Dendritic cell treated with granulocyte-macrophage colony-stimulating factor and Interleukin-4, amounts not matched to agents 40 ng/mL and 50 ng/mL, for 4 days (primary cell): ENCODE measurements at regions of chr5 and their contacts with region 1.

Region 1: DNA sequence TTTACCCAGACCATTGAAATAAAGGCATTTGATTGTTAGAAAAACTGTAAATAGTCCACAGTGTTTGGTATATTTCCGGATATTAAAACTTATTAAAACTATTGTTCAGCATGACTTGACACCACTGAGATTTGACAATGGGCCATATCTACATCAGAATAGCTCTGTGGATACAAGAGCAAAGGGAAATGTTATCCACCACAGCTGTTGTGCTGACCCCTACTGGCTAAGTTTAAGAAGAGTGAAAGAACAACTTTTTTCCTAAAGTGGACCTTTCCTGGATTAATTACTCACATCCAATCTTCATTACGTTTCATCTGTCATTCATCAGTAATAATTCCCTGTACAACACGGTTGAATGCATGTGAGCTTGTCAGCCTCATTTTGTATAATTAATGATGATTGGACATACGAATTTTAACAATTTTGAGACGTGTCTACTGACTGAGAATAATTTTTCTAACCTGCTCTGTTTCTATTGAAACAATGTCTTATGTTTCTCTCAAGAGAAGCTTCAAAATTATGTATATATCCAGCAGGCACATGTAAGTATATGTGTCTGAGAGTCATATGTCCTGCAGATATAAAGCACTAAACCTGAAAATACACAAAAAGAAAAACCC is 1952.6 kb downstream of the MAT2B start:
- H3K4me3 Mint-ChIP-seq: no peak overlapping the region
- H3K27ac Mint-ChIP-seq: no peak overlapping the region
- H3K4me1 Mint-ChIP-seq: no peaks in the 10 kb centered on the region
- H3K27me3 Mint-ChIP-seq: no peaks in the 10 kb centered on the region

Region 2: GRCh38 chr5:164832516-164832915 is 625.5 kb before region 1 on chr5:
- intact Hi-C with region 1: no loop called
- H3K4me3 Mint-ChIP-seq: no peak overlapping the region
- H3K27ac Mint-ChIP-seq: no peak overlapping the region
- H3K4me1 Mint-ChIP-seq: no peaks in the 10 kb centered on the region
- H3K27me3 Mint-ChIP-seq: no peaks in the 10 kb centered on the region

Region 3: GRCh38 chr5:165029099-165029870 is 428.7 kb before region 1 on chr5:
- intact Hi-C with region 1: loop called (anchors 5 kb)
- H3K4me3 Mint-ChIP-seq: no peak overlapping the region
- H3K27ac Mint-ChIP-seq: no peak overlapping the region
- H3K4me1 Mint-ChIP-seq: no peaks in the 10 kb centered on the region
- H3K27me3 Mint-ChIP-seq: no peaks in the 10 kb centered on the region

Region 4: DNA sequence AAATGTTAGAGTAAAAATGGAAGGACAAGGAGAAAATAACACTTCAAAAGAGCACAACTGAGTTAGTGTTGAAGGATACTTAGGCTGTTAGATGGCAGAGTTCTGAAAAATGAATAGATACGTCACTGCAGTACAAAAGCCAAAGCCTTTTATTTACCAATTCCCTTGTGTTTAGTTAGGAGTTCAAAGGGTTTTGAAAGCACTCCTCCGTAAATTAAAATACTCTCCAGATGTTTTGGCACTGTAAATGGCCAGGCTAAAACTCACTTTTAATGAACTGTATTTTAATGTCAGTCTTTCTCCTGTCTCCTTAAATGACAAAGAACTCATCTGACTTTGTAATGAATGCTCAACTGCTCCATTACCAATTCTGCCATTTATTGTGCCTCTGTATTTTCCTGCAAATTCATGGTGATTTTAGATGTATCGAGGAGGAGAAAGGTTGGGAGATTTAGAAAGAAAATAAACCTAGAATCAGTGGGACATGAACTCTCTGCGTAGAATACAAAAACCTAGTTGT is 225.4 kb before region 1 on chr5:
- intact Hi-C with region 1: loop called (anchors 5 kb)
- H3K4me3 Mint-ChIP-seq: no peak overlapping the region
- H3K27ac Mint-ChIP-seq: no peak overlapping the region
- H3K4me1 Mint-ChIP-seq: peaks cover 9% of the 10 kb centered on the region
- H3K27me3 Mint-ChIP-seq: no peaks in the 10 kb centered on the region